ENCODE measurements at regions of chr3 and their contacts with region 1.

Region 1: GRCh38 chr3:99842826-99843589 is 25.3 kb downstream of the CMSS1 start:
- DNase-seq: no peak
- ATAC-seq: peak; percentile 74 to 76
- H3K4me3 ChIP-seq: no peak overlapping the region
- H3K27ac ChIP-seq: peak overlapping the region; percentile 61 to 79 (median 72)
- H3K4me1 ChIP-seq: peaks cover 44 to 46% of the 10 kb centered on the region in 2 donors
- H3K27me3 ChIP-seq: no peaks in the 10 kb centered on the region
- CTCF ChIP-seq: peak; percentile 58 to 76 (median 65)
- POLR2A ChIP-seq: no peak

Region 2: GRCh38 chr3:99909714-99910494 is 66.9 kb after region 1 on chr3:
- in situ Hi-C with region 1: no loop called
- intact Hi-C with region 1: loop called (anchors 5 kb)
- DNase-seq: no peak
- ATAC-seq: no peak
- H3K4me3 ChIP-seq: no peak overlapping the region
- H3K27ac ChIP-seq: peak overlapping the region; percentile 24 to 77 (median 47)
- H3K4me1 ChIP-seq: peaks cover 28 to 44% of the 10 kb centered on the region in 2 donors
- H3K27me3 ChIP-seq: no peaks in the 10 kb centered on the region
- CTCF ChIP-seq: no peak
- POLR2A ChIP-seq: no peak

Region 3: DNA sequence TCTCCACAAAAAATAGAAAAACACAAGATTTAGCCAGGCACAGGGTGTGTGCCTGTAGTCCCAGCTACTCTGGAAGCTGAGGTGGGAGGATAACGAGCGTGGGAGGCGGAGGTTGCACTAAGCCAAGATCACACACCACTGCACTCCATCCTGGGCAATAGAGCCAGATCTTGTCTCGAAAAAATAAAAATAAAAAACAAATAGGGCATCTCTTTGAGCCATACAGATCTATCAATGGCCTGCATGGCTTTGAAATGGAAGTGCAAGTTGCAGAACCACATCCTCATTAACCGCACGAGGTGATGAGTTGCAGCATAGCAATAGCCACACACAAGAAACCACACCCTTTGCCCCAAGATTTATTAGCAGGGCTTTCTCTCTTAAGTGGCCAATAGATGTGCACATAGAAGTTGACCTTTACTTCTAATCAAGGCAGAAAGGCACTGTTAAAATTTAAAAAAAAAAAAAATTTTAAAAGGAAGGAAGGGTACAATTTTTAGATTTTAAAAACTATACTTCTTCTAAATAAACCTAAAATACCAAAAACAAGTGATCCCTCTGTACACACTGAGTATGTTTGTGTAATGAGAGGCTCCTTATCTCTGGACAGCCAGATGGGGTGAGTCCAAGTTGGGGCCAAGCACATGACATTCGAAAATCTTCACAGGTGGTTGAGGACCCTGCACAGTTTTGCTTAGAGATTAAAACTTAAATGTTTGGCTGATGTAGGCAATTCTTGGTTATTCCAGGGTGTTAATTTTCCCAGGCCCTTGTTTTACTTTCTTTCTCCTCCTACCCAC is 217.9 kb after region 1 on chr3:
- in situ Hi-C with region 1: loop called (anchors 10 to 25 kb)
- intact Hi-C with region 1: loop called (anchors 5 kb)
- DNase-seq: no peak
- ATAC-seq: no peak
- H3K4me3 ChIP-seq: no peak overlapping the region
- H3K27ac ChIP-seq: peak overlapping the region; percentile 27 to 71 (median 65)
- H3K4me1 ChIP-seq: peaks cover 38 to 68% of the 10 kb centered on the region in 2 donors
- H3K27me3 ChIP-seq: no peaks in the 10 kb centered on the region
- CTCF ChIP-seq: no peak
- POLR2A ChIP-seq: no peak

Region 4: GRCh38 chr3:100068826-100069225 is 225.8 kb after region 1 on chr3:
- in situ Hi-C with region 1: loop called (anchors 10 to 25 kb)
- intact Hi-C with region 1: loop called (anchors 5 kb)
- DNase-seq: peak; percentile 72 to 79
- ATAC-seq: peak; percentile 86 to 89
- H3K4me3 ChIP-seq: peak overlapping the region in 1 of 4 donors; percentile 19
- H3K27ac ChIP-seq: peak overlapping the region; percentile 63 to 80 (median 74)
- H3K4me1 ChIP-seq: peaks cover 44 to 61% of the 10 kb centered on the region in 2 donors
- H3K27me3 ChIP-seq: no peaks in the 10 kb centered on the region
- CTCF ChIP-seq: peak; percentile 67 to 86 (median 78)
- POLR2A ChIP-seq: no peak

Region 5: GRCh38 chr3:100169201-100169920 is 326.4 kb after region 1 on chr3:
- in situ Hi-C with region 1: no loop called
- intact Hi-C with region 1: loop called (anchors 5 kb)
- DNase-seq: no peak
- ATAC-seq: no peak
- H3K4me3 ChIP-seq: no peak overlapping the region
- H3K27ac ChIP-seq: peak overlapping the region; percentile 9 to 42 (median 30)
- H3K4me1 ChIP-seq: peaks cover 33 to 51% of the 10 kb centered on the region in 2 donors
- H3K27me3 ChIP-seq: no peaks in the 10 kb centered on the region
- CTCF ChIP-seq: no peak
- POLR2A ChIP-seq: no peak

Region 6: GRCh38 chr3:100245927-100246326 is 402.9 kb after region 1 on chr3:
- in situ Hi-C with region 1: loop called in 3 of 4 experiments (anchors 5 kb)
- intact Hi-C with region 1: no loop called
- DNase-seq: no peak
- ATAC-seq: no peak
- H3K4me3 ChIP-seq: no peak overlapping the region
- H3K27ac ChIP-seq: no peak overlapping the region
- H3K4me1 ChIP-seq: no peaks in the 10 kb centered on the region
- H3K27me3 ChIP-seq: no peaks in the 10 kb centered on the region
- CTCF ChIP-seq: no peak
- POLR2A ChIP-seq: no peak

Region 7: GRCh38 chr3:100254168-100254777 is 411.3 kb after region 1 on chr3:
- in situ Hi-C with region 1: loop called in 3 of 4 experiments (anchors 5 kb)
- intact Hi-C with region 1: loop called (anchors 1 kb)
- DNase-seq: peak; percentile 33 to 63
- ATAC-seq: peak; percentile 85 to 93
- H3K4me3 ChIP-seq: no peak overlapping the region
- H3K27ac ChIP-seq: peak overlapping the region; percentile 28 to 66 (median 64)
- H3K4me1 ChIP-seq: peaks cover 23 to 26% of the 10 kb centered on the region in 2 donors
- H3K27me3 ChIP-seq: no peaks in the 10 kb centered on the region
- CTCF ChIP-seq: peak; percentile 75 to 90 (median 87)
- POLR2A ChIP-seq: no peak